BJ (cell line): ENCODE measurements at regions of chr1 and their contacts with region 1.

Region 1: DNA sequence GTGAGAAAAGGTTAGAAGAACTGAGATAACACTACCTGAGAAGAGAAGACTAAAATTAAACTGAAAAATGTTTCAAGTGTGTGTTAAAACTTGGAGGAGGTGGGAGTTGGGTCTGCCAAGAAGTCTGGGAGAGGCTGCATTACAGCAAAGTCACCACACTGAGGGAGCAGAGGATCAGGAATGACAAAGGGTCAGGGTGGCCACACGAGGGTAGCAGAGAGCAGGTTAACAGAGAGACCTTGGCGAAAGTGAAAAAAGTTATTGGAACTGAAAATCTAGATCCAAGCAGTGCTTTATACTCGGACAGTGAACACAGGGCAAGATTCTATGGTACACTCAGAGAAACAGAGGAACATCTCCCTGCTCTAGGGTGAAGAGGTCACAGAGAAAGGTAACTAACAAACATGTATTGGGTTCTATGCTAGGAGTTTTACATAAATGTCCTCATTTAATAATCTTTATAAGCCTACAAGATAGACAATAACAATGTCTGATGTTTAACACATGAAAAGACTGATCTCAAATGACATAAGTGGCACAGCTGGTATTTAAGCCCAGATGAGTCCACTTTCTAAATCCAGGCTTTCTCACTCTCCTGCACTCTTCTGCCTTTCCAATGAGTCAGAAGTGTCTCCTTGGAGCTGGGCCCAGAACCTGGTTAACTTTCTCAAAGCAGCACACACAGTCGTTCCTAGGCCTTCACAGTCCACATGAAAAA is 10.3 kb upstream of the CADM3 start:
- DNase-seq: peak; percentile 57
- H3K4me3 ChIP-seq: no peak overlapping the region
- H3K27me3 ChIP-seq: no peaks in the 10 kb centered on the region
- CTCF ChIP-seq: peak; percentile 97

Region 2: GRCh38 chr1:159175571-159175970 is 14.4 kb after region 1 on chr1:
- CTCF ChIA-PET with region 1: interaction called, 13 read pairs
- POLR2A ChIA-PET with region 1: no interaction called
- DNase-seq: no peak
- H3K4me3 ChIP-seq: no peak overlapping the region
- H3K27me3 ChIP-seq: peaks cover 14% of the 10 kb centered on the region
- CTCF ChIP-seq: no peak

Region 3: DNA sequence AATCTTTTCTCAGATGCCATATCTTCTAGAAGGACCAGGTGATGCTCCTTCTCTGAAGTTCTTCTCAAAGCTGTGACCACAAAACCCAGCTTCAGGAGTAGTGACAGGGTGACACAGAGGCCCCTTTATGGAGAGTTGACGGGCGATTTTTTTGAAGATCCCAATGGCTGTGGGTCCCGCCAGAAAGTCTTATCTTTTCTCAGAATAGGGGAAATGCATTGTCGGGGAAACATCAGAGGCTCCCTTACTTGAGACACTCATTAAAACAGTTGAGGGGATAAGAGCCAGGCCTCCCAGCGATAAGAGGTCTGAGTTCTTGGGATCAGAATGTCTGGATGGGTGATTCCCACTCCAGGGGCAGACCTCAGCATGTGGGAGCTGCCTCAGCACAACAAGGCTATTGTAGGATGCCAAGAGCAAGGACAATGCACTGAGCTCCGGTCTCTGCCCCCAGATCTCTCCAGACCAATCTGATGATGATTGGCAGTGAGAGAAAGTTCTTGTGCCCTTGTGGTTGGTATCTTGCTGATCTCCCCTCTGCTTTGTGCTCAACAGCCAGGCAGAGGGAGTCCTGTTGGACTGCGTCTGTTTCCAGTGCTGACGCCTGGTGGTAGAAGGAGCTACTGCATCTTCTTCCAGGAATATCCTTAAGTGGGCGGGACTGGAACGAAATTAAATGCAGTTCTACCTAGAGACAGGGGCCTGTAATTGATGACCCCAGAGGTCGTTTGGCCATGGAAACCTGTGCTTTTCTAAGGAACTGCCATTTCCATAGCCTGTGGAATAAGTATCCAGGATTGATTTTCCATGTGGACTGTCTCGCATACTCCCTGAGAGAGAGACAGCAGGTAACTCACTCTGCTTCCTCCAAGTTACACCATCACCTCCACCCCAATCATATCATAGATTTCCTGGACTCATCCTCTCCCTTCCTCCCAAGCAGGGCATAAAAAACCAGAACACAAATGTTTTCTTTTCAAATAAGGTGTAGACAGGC is 36.7 kb after region 1 on chr1:
- CTCF ChIA-PET with region 1: interaction called, 110 read pairs
- POLR2A ChIA-PET with region 1: no interaction called
- DNase-seq: peak; percentile 6
- H3K4me3 ChIP-seq: no peak overlapping the region
- H3K27me3 ChIP-seq: no peaks in the 10 kb centered on the region; the same call in 1 of the 2 replicates
- CTCF ChIP-seq: peak; percentile 92

Region 4: DNA sequence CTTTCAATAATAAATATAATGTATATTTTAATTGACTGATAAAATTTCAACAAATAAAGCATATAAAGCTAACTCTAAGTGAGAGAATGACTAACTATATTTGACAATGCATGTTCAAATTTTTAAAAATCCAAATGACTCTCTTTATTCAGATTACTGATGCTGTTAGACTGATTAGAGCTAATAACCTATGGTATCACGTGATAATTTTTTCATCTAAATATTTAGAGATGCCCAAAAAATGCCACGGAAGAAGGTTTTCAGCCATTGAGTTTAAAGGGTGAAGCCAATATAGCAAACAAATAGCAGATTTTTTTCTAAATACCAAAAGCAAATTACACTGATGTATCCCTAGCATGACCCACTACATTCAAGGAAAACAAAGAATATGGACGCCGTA is 209.7 kb after region 1 on chr1:
- CTCF ChIA-PET with region 1: no interaction called
- POLR2A ChIA-PET with region 1: no interaction called
- DNase-seq: no peak
- H3K4me3 ChIP-seq: no peak overlapping the region
- H3K27me3 ChIP-seq: no peaks in the 10 kb centered on the region
- CTCF ChIP-seq: no peak

Region 5: GRCh38 chr1:159444511-159444910 is 283.4 kb after region 1 on chr1:
- CTCF ChIA-PET with region 1: no interaction called
- POLR2A ChIA-PET with region 1: no interaction called
- DNase-seq: no peak
- H3K4me3 ChIP-seq: no peak overlapping the region
- H3K27me3 ChIP-seq: no peaks in the 10 kb centered on the region
- CTCF ChIP-seq: no peak